ENCODE measurements at regions of chr4 and their contacts with region 1.

Region 1: GRCh38 chr4:78155616-78156105 is 98.5 kb downstream of the FRAS1 start:
- DNase-seq: no peak
- H3K4me3 Mint-ChIP-seq: no peak overlapping the region
- H3K27ac Mint-ChIP-seq: no peak overlapping the region
- H3K4me1 Mint-ChIP-seq: peaks cover 42% of the 10 kb centered on the region
- H3K27me3 Mint-ChIP-seq: no peaks in the 10 kb centered on the region
- CTCF ChIP-seq: no peak

Region 2: DNA sequence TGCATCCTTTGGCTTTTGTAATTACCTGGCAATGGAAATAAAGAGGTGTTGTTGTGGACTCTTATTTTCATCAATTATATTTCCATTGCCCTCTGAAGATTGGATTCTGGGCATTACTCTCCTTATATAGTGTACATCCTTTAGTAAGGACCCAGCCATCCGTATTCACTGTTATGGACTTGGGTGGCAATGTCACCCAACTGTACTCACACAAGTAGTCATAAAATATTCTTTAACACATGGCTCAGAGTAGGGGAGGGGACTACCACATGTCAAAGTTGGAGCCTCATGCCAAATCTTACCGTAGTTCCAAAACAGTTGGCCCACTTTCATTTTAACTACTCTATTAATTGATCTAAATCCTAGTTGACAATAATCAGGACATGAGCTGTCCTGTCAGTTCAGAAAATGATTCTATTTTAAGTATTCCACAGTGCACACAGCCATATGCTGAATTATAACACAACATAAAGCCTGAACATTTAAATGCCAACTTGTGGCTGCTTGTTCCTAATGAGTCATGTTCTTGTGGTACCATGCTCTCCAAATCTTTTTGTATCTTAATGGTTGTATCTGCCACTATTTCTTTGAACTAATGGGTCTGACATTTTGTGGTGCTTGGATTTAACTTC is 93.6 kb before region 1 on chr4:
- CTCF ChIA-PET with region 1: interaction called, 5 read pairs
- intact Hi-C with region 1: loop called (anchors 10 kb)
- DNase-seq: no peak
- H3K4me3 Mint-ChIP-seq: no peak overlapping the region
- H3K27ac Mint-ChIP-seq: no peak overlapping the region
- H3K4me1 Mint-ChIP-seq: no peaks in the 10 kb centered on the region
- H3K27me3 Mint-ChIP-seq: no peaks in the 10 kb centered on the region
- CTCF ChIP-seq: no peak

Region 3: DNA sequence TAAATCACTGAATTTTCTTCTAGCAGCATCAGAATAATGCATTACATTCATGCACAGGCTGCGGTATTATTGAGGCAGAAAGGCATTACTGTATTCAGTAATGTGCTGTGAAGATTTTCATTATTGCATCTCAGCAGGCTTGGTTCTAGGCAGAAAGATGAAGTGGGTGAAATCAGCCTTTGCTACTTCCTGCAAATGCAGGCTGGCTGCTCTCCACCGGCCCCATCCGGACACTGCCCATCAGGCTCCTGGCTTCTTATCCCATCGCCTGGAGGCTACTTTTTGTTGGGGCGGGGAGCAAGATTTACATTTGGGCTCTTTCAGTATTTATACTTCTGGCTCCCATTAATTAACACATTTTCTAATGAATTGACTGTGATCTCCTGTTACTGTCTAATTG is 19.2 kb after region 1 on chr4:
- CTCF ChIA-PET with region 1: interaction called, 3 read pairs
- intact Hi-C with region 1: loop called (anchors 2 kb)
- DNase-seq: no peak
- H3K4me3 Mint-ChIP-seq: no peak overlapping the region
- H3K27ac Mint-ChIP-seq: peak overlapping the region; percentile 52
- H3K4me1 Mint-ChIP-seq: peaks cover 38% of the 10 kb centered on the region
- H3K27me3 Mint-ChIP-seq: no peaks in the 10 kb centered on the region
- CTCF ChIP-seq: no peak

Measured in Calu3 (cell line).